ENCODE measurements at regions of chr3 and their contacts with region 1.

Region 1: GRCh38 chr3:194671900-194672808 is at the start of gene LSG1:
- DNase-seq: peak; percentile 94
- ATAC-seq: peak; percentile 84
- H3K4me3 Mint-ChIP-seq: peak within 1 kb of the TSS; percentile 100
- H3K27ac Mint-ChIP-seq: peak within 1 kb of the TSS; percentile 96
- H3K4me1 Mint-ChIP-seq: peaks cover 59% of the 10 kb centered on the region
- H3K27me3 Mint-ChIP-seq: peaks cover 6% of the 10 kb centered on the region
- total RNA-seq, gene LSG1: 41.4 to 43.9 TPM

Region 2: DNA sequence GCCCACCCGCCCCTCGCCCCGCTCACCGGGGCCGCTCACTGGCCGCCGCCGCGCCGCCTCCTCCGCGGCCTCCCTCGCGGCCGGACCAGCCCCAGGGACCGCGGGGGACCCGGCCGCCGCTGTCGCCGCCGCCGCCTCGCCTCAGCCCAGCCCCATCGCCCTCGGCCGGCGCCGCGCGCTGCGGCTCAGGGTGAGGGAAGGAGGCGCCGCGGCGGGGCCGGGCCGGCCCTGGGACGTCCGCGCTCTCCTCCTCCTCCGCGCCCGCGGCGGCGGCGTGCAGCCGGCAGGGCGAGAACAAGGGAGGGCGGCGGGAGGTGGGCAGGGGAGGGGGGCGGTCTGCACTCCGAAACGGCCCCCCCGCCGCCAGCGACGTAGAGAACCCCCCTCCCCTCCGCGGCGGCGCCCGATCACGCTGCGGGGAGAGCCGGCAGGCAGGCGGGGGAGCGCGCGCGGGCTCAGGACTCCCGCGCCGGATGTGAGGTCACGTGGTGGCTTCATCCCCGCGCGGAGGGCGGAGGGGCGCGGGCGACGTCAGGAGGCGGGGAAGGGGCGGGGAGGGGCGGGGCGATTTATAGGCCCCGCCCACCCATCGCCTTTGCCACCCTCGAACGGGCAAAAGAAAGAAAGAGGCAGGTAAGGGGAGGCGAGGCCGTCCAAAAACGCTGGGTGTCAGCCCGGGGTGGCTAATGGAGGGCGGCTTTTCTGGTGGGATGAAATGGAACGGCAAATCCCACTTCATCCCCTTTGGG is 185.4 kb before region 1 on chr3 and contains the start of gene ATP13A3:
- CTCF ChIA-PET with region 1: interaction called, 3 read pairs
- POLR2A ChIA-PET with region 1: no interaction called
- intact Hi-C with region 1: loop called (anchors 1 to 5 kb)
- DNase-seq: peak; percentile 94
- ATAC-seq: peak; percentile 75
- H3K4me3 Mint-ChIP-seq: peak within 1 kb of the TSS; percentile 95
- H3K27ac Mint-ChIP-seq: peak within 1 kb of the TSS; percentile 93
- H3K4me1 Mint-ChIP-seq: peaks cover 54% of the 10 kb centered on the region
- H3K27me3 Mint-ChIP-seq: peaks cover 2% of the 10 kb centered on the region
- total RNA-seq, gene ATP13A3: 61.4 to 107 TPM

Region 3: GRCh38 chr3:194661374-194661773 is 10.8 kb before region 1 on chr3:
- CTCF ChIA-PET with region 1: interaction called, 44 read pairs
- POLR2A ChIA-PET with region 1: interaction called, 3 read pairs
- intact Hi-C with region 1: no loop called
- DNase-seq: no peak
- ATAC-seq: no peak
- H3K4me3 Mint-ChIP-seq: no peak overlapping the region
- H3K27ac Mint-ChIP-seq: no peak overlapping the region
- H3K4me1 Mint-ChIP-seq: peaks cover 23% of the 10 kb centered on the region
- H3K27me3 Mint-ChIP-seq: no peaks in the 10 kb centered on the region

Region 4: DNA sequence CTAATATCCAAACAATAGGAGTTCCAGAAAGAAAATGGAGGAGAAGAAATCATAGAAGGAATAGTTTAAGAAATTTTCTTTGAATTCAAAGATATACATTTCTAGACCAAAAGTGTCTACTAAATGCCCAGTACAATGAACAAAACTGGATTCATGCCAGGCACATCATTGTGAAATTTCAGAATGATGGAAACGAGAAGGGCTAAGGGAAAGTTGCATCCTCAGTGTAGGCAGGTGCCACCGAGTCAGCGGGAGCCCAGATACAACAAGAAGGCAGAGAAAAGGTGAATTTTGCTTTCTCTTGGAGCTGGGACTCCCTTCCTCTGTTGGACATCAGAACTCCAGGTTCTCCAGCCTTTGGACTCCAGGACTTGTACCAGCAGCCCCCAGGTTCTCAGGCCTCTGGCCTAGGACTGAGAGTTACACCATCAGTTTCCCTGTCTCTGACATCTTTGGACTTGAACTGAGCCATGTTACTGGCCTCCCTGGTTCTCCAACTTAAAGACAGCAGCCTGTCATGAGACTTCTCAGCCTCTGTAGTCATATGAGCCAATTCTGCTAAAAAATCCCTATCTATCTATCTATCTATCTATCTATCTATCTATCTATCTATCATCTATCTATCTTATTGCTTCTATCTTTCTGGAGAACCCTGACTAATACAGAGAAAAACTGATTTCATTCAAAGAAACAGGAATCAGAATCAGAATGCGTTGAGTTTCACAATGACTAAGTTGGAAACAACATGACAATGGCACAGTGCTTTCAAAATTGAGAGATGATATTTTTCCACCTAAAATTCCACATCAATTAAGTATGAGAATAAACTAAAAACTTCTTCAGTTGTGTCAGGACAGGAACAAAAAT is 221.2 kb after region 1 on chr3:
- CTCF ChIA-PET with region 1: no interaction called
- POLR2A ChIA-PET with region 1: no interaction called
- intact Hi-C with region 1: loop called in 1 of 2 experiments (anchors 1 kb)
- DNase-seq: peak; percentile 43
- ATAC-seq: peak; percentile 86
- H3K4me3 Mint-ChIP-seq: no peak overlapping the region
- H3K27ac Mint-ChIP-seq: no peak overlapping the region
- H3K4me1 Mint-ChIP-seq: peaks cover 11% of the 10 kb centered on the region
- H3K27me3 Mint-ChIP-seq: peaks cover 21% of the 10 kb centered on the region

Region 5: DNA sequence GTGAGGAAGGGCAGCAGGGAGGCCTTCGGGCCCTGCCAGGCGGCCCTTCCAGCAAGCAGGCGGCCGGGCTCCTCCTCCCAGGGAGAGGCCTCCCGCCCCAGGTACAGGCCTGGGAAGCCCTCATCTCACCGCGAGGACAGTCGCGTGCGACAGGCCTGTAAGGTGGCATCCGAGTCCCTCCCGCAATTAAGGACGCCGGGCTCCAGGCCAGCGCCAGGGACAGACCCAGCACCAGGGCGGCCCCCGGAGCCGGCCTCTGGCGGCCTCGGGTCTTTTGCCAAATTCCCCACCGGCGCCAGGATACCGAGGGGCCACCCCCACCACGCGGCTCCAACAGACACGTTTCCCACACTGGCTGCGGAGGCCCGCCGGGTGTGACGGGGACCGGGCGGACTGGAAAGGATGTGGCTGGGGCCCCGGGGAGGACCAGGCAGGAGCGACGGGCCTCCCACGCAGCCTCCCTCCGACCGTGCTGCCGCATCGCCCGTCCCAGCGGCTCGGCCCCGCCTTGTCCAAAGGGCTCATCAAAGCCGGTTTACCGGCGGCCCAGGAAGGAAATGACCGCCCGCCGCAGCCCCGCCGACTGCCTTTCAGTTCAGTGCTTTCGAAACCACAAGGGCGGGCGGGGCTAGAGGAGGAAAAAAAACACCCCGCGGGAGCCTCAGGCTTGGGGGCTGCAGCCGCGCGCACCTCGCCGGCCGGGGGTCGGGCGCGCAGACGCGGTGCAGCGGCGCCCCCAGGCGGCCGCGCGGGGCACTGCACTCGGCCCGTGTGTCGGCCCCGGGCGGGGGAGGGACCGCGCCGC is 587.5 kb after region 1 on chr3:
- CTCF ChIA-PET with region 1: interaction called, 7 read pairs
- POLR2A ChIA-PET with region 1: no interaction called
- intact Hi-C with region 1: loop called (anchors 1 kb)
- DNase-seq: peak; percentile 90
- ATAC-seq: peak; percentile 81
- H3K4me3 Mint-ChIP-seq: peak overlapping the region; percentile 30
- H3K27ac Mint-ChIP-seq: no peak overlapping the region
- H3K4me1 Mint-ChIP-seq: peaks cover 15% of the 10 kb centered on the region
- H3K27me3 Mint-ChIP-seq: no peaks in the 10 kb centered on the region

Region 6: GRCh38 chr3:195542698-195543499 is 870.7 kb after region 1 on chr3 and contains the start of gene PPP1R2:
- CTCF ChIA-PET with region 1: interaction called, 8 read pairs
- POLR2A ChIA-PET with region 1: no interaction called
- intact Hi-C with region 1: loop called in 1 of 2 experiments (anchors 5 kb)
- DNase-seq: peak; percentile 97
- ATAC-seq: peak; percentile 72
- H3K4me3 Mint-ChIP-seq: peak within 1 kb of the TSS; percentile 95
- H3K27ac Mint-ChIP-seq: peak within 1 kb of the TSS; percentile 95
- H3K4me1 Mint-ChIP-seq: peaks cover 65% of the 10 kb centered on the region
- H3K27me3 Mint-ChIP-seq: no peaks in the 10 kb centered on the region
- total RNA-seq, gene PPP1R2: 77.0 to 134 TPM